Activated CD4-positive, alpha-beta T cell treated with anti-CD3 and anti-CD28 coated beads, Interleukin-2, amount 10 ng/mL, durations not matched to agents 7 days and 5 days (primary cell): ENCODE measurements at regions of chr11 and their contacts with region 1.

Region 1: GRCh38 chr11:62081378-62082291 is 42.2 kb upstream of the INCENP start:
- DNase-seq: peak; percentile 77
- H3K4me3 Mint-ChIP-seq: no peak overlapping the region
- H3K27ac Mint-ChIP-seq: no peak overlapping the region
- H3K4me1 Mint-ChIP-seq: peaks cover 6% of the 10 kb centered on the region
- H3K27me3 Mint-ChIP-seq: peaks cover 3% of the 10 kb centered on the region

Region 2: GRCh38 chr11:61797263-61797944 is 284.2 kb before region 1 on chr11:
- CTCF ChIA-PET with region 1: interaction called, 10 read pairs
- POLR2A ChIA-PET with region 1: no interaction called
- DNase-seq: peak; percentile 86
- H3K4me3 Mint-ChIP-seq: no peak overlapping the region
- H3K27ac Mint-ChIP-seq: no peak overlapping the region
- H3K4me1 Mint-ChIP-seq: peaks cover 42% of the 10 kb centered on the region
- H3K27me3 Mint-ChIP-seq: no peaks in the 10 kb centered on the region

Region 3: GRCh38 chr11:61899146-61899841 is 182.3 kb before region 1 on chr11:
- CTCF ChIA-PET with region 1: interaction called, 52 read pairs
- POLR2A ChIA-PET with region 1: interaction called, 3 read pairs
- DNase-seq: peak; percentile 92
- H3K4me3 Mint-ChIP-seq: no peak overlapping the region
- H3K27ac Mint-ChIP-seq: peak overlapping the region; percentile 43
- H3K4me1 Mint-ChIP-seq: peaks cover 6% of the 10 kb centered on the region
- H3K27me3 Mint-ChIP-seq: no peaks in the 10 kb centered on the region

Region 4: DNA sequence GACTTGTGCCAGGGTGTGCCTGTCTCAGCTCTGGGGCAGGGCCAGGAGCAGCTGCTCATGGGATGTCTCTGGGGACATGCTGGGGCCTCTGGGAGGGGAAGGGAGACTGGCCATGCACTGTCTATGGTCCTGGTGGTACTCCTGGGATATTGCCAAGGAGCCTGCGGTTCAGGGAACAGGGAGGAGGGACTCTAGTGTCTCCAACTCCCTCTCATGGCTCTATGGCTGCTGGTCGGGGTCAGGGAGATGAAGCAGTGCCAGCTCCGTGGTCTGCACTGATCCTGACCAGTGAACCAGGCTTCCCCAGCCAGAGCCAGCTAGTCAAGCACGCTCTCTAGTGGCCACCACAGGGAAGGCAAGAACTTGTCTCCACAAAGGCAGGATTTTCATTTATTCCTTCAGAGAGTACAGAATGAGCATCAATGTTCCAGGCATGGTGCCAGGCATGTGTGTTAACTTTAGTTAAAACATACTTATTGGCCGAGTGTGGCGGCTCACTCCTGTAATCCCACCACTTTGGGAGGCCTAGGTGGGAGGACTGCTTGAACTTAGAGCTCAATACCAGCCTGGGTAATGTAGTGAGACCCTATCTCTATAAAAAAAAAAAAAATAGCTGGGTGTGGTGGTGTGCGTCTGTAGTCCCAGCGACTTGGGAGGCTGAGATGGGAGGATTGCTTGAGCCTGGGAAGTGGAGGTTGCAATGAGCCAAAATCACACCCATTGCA is 134.0 kb before region 1 on chr11:
- CTCF ChIA-PET with region 1: interaction called, 20 read pairs
- POLR2A ChIA-PET with region 1: no interaction called
- DNase-seq: peak; percentile 75
- H3K4me3 Mint-ChIP-seq: no peak overlapping the region
- H3K27ac Mint-ChIP-seq: no peak overlapping the region
- H3K4me1 Mint-ChIP-seq: no peaks in the 10 kb centered on the region
- H3K27me3 Mint-ChIP-seq: peaks cover 6% of the 10 kb centered on the region

Region 5: GRCh38 chr11:62030071-62030684 is 51.5 kb before region 1 on chr11:
- CTCF ChIA-PET with region 1: interaction called, 10 read pairs
- POLR2A ChIA-PET with region 1: no interaction called
- DNase-seq: no peak
- H3K4me3 Mint-ChIP-seq: no peak overlapping the region
- H3K27ac Mint-ChIP-seq: no peak overlapping the region
- H3K4me1 Mint-ChIP-seq: peaks cover 21% of the 10 kb centered on the region
- H3K27me3 Mint-ChIP-seq: no peaks in the 10 kb centered on the region

Region 6: DNA sequence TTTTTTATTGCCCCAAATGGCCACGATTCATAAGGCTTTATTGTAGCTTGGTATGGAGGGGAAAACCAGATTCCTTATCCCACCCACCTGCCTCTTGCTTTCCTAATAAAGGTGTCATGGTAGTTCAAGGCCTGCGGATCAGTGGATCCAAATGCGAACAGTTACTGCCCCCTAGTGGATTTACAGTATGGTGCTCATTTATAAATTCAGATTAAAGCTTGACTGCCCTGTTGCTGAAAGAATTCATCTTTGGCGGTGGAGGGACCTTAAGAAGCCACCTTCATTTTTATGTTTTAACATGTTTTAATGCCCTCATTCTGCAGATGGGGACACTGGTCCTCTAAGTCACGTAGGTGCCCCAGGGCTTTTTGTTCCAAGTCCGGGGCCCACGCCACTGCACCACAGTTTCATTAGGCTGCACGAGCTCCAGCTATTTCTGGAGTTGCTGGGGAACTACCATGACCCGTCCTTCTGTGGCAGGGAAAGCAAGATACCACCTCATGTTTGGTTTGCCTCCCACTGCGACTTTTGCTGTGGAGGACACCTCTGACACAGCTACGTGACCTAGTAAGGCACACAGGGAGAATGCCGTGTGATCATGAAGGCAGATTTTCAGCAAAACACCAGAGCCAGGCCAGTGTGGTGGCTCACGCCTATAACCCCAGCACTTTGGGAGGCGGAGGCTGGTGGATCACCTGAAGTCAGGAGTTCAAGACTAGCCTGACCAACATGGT is 26.5 kb after region 1 on chr11:
- CTCF ChIA-PET with region 1: interaction called, 29 read pairs
- POLR2A ChIA-PET with region 1: no interaction called
- DNase-seq: peak; percentile 66
- H3K4me3 Mint-ChIP-seq: no peak overlapping the region
- H3K27ac Mint-ChIP-seq: peak overlapping the region; percentile 5
- H3K4me1 Mint-ChIP-seq: peaks cover 20% of the 10 kb centered on the region
- H3K27me3 Mint-ChIP-seq: peaks cover 5% of the 10 kb centered on the region

Region 7: DNA sequence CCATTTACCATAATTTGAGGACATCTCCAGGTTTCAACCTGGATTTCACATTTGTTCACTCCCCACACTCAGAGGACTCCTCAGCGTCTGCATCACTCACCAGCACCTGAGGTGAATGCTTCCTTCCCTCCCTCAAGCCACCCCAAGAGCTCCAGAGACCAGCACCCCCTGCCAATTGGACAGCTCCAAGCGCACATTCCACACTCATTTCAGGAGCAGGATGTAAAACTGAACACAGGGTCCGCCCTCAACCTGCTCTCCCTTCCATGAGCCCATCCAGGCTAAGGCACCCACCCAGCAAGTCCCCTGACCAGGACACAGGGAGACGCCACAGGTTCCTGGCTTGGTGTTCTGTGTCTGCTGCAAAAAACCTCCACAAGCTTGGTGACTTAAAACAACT is 112.3 kb after region 1 on chr11:
- CTCF ChIA-PET with region 1: no interaction called
- POLR2A ChIA-PET with region 1: no interaction called
- DNase-seq: no peak
- H3K4me3 Mint-ChIP-seq: no peak overlapping the region
- H3K27ac Mint-ChIP-seq: no peak overlapping the region
- H3K4me1 Mint-ChIP-seq: no peaks in the 10 kb centered on the region
- H3K27me3 Mint-ChIP-seq: peaks cover 31% of the 10 kb centered on the region